PC-9 (cell line): ENCODE measurements at regions of chr19 and their contacts with region 1.

Region 1: GRCh38 chr19:15652559-15653278 is 12.0 kb downstream of the CYP4F3 start:
- DNase-seq: no peak
- H3K4me3 ChIP-seq: no peak overlapping the region
- H3K27ac ChIP-seq: no peak overlapping the region
- H3K4me1 ChIP-seq: no peaks in the 10 kb centered on the region
- H3K27me3 ChIP-seq: no peaks in the 10 kb centered on the region
- CTCF ChIP-seq: no peak

Region 2: DNA sequence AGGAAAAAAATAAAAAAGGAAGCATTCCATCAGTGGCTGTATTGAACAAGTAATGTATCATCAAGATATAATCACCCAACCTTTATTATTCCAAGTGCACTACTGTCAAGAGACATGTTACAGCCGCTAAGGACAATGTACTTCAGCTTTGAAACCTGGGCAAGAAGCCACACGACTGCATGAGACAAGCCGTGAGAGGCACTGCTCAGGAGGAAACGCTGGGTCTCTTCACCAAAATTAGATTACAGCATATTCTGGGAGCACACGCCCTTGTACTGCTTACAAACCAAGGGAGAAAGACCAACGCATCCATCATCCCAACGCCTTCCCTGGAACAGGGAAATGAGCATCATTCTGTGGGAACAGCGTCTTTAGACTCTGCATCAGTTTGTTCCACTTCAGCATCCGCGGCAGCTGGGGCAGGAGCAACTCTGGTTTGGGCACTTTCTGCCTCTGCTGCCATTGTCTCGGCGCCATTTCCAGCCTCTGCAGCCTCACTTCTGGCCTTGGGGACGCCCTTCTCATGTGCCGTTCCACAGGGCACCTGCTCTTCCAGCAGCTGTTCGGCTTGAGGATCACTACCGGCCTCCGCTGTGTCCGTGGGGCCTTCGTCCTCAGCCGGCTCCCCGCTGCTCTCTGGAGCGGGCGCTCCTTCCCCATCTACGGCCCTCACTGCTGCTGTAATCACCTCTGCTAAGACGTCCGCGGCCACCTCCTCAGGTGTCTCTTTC is 298.0 kb before region 1 on chr19:
- CTCF ChIA-PET with region 1: no interaction called
- POLR2A ChIA-PET with region 1: interaction called, 12 read pairs
- intact Hi-C with region 1: no loop called
- DNase-seq: no peak
- H3K4me3 ChIP-seq: no peak overlapping the region
- H3K27ac ChIP-seq: no peak overlapping the region
- H3K4me1 ChIP-seq: 0 out of 2 replicates have a peak, but pooled peaks cover 4% of the 10 kb centered on the region
- H3K27me3 ChIP-seq: no peaks in the 10 kb centered on the region
- CTCF ChIP-seq: no peak